ENCODE measurements at regions of chrX and their contacts with region 1.

Region 1: GRCh38 chrX:130049821-130050220 is 60.5 kb downstream of the ELF4 start:
- DNase-seq: no peak
- H3K4me3 ChIP-seq: no peak overlapping the region
- H3K4me1 ChIP-seq: peaks cover 6% of the 10 kb centered on the region
- H3K27me3 ChIP-seq: no peaks in the 10 kb centered on the region

Region 2: DNA sequence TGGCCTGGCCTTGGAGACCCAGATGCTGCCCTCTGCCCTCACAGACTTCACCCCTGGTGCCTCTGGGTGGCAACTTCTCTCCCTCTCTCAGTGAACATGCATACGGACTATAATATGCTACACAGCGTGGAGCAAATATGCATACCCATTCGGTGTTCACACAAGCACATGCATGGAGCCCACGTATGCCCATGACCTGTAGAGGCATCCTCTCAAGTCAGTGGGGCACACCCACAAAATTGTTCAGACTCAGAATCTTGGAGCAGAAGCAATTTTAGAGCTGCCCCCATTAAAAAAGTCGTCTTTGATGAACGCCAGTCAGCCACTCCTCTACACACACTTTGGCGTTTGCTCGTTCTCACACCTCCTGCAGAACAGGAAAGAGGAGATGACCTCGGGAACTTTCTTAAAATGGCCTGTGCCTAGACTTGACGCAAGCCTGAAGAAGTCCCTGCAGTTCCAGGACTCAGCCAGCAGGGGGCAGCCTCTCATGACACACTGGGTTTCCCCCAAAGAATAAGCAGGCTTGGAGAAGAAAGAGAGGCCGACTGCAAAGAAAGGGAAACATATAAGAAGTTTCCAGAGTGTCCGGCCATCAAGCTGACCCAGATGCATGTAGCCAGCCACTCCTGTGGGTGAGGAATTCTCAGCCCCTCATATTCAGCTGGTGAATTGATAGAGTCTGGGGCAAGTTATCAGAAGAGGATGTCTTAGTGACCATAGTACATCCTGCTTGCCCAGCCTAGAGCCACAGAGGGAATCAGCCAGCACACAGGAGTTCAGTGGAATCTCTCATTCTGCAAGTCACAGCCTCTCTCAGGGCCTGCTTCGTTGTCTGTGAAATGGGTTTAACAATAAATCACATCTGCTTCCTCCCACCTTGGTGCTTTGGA is 412.4 kb before region 1 on chrX:
- in situ Hi-C with region 1: no loop called
- DNase-seq: peak; percentile 48 to 87
- H3K4me3 ChIP-seq: no peak overlapping the region
- H3K4me1 ChIP-seq: no peaks in the 10 kb centered on the region
- H3K27me3 ChIP-seq: no peaks in the 10 kb centered on the region

Region 3: GRCh38 chrX:129925305-129926092 is 124.3 kb before region 1 on chrX:
- in situ Hi-C with region 1: loop called (anchors 5 kb)
- DNase-seq: peak; percentile 73 to 89
- H3K4me3 ChIP-seq: no peak overlapping the region
- H3K4me1 ChIP-seq: no peaks in the 10 kb centered on the region
- H3K27me3 ChIP-seq: no peaks in the 10 kb centered on the region

Region 4: GRCh38 chrX:130165703-130166502 is 116.1 kb after region 1 on chrX and contains the start of gene AIFM1:
- in situ Hi-C with region 1: no loop called
- DNase-seq: peak; percentile 97 to 98
- H3K4me3 ChIP-seq: peak within 1 kb of the TSS; percentile 83
- H3K4me1 ChIP-seq: peaks cover 28% of the 10 kb centered on the region
- H3K27me3 ChIP-seq: no peaks in the 10 kb centered on the region

Measured in HAP-1 (cell line).